Adrenal gland (tissue), 19 donors: ENCODE measurements at regions of chr1 and their contacts with region 1.

Region 1: DNA sequence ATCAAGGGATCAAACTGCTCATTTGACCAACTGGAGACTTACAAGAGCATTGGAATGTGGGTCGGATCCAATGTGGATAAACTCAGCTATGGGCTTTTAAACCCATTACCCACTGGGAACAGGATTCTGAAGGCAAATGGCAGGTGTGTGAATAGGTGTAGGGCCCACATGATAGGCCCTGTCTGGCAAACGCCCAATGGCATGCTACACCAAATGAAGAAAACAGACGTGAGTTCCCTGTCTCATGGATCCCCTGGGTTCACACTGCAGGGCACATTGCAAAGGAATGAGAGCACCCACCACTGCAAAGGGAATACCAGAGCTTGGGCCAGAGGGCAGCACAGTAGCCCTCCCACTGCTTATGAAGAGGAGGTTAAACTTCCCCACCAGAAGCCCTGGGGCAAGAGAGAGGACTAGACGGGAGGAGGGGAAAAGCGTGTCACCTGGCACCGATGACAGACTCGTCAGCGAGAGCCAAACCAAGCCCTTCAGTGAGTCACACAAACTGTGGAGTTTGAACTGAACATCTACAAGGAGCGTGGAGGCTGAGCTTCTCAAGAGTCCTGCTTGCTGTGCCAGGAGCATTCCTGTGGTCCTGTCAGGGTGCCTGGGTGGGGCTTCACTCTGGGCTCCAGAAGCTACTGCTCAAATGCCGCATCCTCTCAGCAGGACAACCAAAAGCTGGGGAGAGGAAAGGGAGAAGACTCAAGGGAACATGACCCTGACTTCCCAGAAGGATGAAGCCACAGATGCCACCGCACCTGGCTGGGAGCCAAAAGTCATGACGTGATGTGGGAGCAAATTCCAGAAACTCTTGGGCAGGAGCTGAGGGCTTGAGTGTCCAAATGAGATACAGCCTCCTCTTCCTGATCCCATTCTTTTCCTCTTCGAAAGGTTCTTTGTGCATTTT is 61.1 kb downstream of the TOMM20 start:
- DNase-seq: peak; percentile 79 to 89 (median 84)
- H3K4me3 ChIP-seq: no peak overlapping the region
- H3K27ac ChIP-seq: peak overlapping the region in 3 of 5 donors; percentile 11 to 79 (median 74)
- H3K4me1 ChIP-seq: peaks cover 15 to 22% of the 10 kb centered on the region in 2 donors
- H3K27me3 ChIP-seq: no peaks in the 10 kb centered on the region
- CTCF ChIP-seq: no peak
- POLR2A ChIP-seq: no peak

Region 2: DNA sequence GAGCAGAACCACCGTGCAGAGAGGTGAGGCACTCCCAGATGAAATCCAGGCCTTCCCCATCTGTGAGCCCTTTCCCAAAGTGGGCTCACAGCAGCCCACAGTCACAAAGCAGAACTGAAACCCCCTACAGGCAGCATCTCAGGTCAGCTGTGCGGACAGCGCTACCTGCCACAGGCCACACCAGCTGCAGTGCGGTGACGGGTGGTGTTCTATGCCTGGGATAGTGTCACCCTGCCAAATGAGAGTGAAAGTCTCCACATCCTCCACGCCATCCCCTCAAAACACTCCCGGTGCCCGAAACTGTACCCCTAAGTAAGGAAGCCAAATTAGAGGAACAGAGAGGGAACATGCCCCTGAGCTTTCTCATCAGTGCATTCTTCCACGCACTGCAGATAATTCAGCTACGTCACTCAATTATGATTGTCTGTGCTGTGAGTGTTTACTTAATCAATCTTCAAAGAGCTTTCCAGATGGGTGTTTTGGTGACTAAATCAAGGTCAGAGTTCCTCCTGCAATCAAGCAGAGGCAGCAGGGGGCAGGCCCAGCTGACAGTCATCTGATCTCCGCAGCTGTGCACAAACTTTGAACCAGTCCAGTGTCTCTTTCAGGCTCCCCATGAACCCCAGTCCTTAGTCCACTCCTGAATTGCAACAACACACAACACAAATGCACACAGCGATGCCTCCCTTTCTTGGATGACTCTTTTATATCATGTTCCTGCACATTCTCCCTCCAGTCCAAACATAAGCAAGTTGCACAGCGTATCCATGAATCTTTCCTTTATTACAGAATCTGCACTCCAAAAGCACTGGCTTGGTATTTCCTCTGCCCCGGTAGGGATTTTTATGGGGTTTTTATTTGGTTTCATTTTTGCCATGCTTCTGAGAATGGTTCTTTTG is 88.9 kb before region 1 on chr1:
- intact Hi-C with region 1: no loop called
- DNase-seq: peak; percentile 73 to 91 (median 86)
- H3K4me3 ChIP-seq: peak overlapping the region in 1 of 4 donors; percentile 7
- H3K27ac ChIP-seq: peak overlapping the region; percentile 94 to 99 (median 95)
- H3K4me1 ChIP-seq: peaks cover 61 to 82% of the 10 kb centered on the region in 2 donors
- H3K27me3 ChIP-seq: no peaks in the 10 kb centered on the region
- CTCF ChIP-seq: peak in 1 of 6 experiments; percentile 21
- POLR2A ChIP-seq: peak in 1 of 2 donors; percentile 67

Region 3: DNA sequence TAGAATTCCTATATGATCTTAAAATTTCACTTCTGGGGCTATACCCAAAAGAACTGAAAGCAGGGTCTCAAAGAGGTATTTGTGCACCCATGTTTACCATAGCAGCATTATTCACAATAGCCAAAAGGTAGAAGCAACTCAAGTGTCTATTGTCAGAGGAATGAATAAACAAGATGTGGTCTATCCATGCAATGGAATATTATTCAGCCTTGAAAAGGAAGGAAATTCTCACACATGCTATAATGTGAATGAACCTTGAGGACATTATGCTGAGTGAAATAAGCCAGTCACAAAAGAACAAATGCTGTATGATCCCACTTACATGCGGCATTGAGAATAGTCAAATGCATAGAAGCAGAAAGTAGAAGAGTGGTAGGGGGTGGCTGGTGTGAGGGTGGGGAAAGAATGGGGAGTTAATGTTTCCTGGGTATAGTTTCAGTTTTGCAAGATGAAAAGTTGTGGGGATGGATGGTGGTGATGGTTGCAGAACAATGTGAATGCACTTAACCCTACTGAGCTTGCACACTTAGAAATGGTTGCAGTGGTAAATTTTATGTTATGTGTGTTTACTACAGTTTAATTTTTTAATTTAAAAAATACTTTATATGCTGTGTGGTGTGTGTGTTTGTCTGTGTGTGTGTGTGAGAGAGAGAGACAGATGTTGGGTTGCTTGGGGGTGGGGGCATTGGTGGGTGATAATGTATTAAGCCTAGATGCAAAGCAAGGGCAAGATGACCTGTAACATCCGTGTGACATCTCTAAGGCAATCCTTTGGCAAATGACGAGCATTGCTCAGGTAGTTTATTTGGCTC is 61.2 kb before region 1 on chr1:
- intact Hi-C with region 1: loop called in 1 of 2 experiments (anchors 10 kb)
- DNase-seq: peak in 1 of 7 donors; percentile 3
- H3K4me3 ChIP-seq: no peak overlapping the region
- H3K27ac ChIP-seq: no peak overlapping the region
- H3K4me1 ChIP-seq: peaks cover 0 to under 1% of the 10 kb centered on the region in 2 donors
- H3K27me3 ChIP-seq: no peaks in the 10 kb centered on the region
- CTCF ChIP-seq: no peak
- POLR2A ChIP-seq: no peak